Dendritic cell treated with granulocyte-macrophage colony-stimulating factor and Interleukin-4, amounts not matched to agents 40 ng/mL and 50 ng/mL, for 4 days (primary cell): ENCODE measurements at regions of chr9 and their contacts with region 1.

Region 1: GRCh38 chr9:79565245-79565644 is 6.5 kb upstream of the TLE4 start:
- H3K4me3 Mint-ChIP-seq: no peak overlapping the region
- H3K27ac Mint-ChIP-seq: no peak overlapping the region
- H3K4me1 Mint-ChIP-seq: peaks cover 16% of the 10 kb centered on the region
- H3K27me3 Mint-ChIP-seq: peaks cover 6% of the 10 kb centered on the region

Region 2: DNA sequence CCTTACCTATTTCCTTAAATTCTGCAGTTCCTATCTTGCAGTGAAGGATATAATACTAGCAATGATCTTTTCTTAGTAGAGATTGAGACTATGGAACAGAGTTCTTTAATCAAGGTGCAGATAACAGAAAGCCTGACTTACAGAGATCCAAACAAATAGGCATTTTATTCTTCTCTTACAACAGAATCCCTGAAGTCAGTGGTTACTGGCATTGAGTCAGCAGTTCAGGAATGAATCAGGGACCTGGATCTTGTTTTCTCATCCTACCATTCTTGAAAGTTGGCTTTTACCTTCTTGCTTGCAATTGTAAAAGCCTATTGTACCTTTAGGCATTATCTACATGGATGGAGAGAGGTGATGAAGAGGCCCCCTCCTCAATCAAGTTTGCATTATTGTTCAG is 41.0 kb before region 1 on chr9:
- intact Hi-C with region 1: no loop called
- H3K4me3 Mint-ChIP-seq: no peak overlapping the region
- H3K27ac Mint-ChIP-seq: no peak overlapping the region
- H3K4me1 Mint-ChIP-seq: no peaks in the 10 kb centered on the region
- H3K27me3 Mint-ChIP-seq: no peaks in the 10 kb centered on the region

Region 3: DNA sequence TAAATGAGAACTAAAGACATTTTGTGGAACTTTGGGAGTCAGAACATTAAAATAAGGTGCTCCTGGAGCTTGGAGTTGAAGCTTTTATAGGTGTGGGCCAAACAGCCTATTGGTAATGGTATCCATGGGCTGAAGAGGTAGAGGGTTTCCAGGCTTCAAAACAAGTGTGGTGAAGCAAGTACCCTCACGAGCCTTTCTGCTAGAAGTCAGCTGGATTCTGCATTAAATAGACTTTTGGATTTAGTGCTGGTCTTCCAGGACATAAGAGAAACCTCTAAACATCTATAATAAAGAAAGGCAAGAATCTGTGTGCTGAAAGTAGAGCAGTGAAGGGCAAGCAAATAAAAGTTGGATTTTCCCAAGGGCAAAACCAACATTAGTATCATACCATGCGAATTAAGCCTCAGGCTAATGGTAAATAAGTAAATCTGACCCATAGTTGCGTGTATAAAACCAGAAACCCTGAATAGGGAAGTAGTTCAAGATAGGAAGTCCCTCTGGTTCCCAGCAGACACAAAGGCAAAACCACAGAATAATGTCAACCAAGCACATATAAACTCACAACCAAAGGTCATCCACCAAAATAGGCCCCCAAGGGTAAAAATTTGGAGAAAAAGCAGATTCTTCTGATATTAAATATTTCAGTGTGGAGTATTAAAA is 312.8 kb after region 1 on chr9:
- intact Hi-C with region 1: loop called (anchors 10 kb)
- H3K4me3 Mint-ChIP-seq: no peak overlapping the region
- H3K27ac Mint-ChIP-seq: peak overlapping the region; percentile 69
- H3K4me1 Mint-ChIP-seq: peaks cover 30% of the 10 kb centered on the region
- H3K27me3 Mint-ChIP-seq: peaks cover 8% of the 10 kb centered on the region

Region 4: GRCh38 chr9:79962836-79963235 is 397.6 kb after region 1 on chr9:
- intact Hi-C with region 1: no loop called
- H3K4me3 Mint-ChIP-seq: no peak overlapping the region
- H3K27ac Mint-ChIP-seq: no peak overlapping the region
- H3K4me1 Mint-ChIP-seq: no peaks in the 10 kb centered on the region
- H3K27me3 Mint-ChIP-seq: no peaks in the 10 kb centered on the region

Region 5: DNA sequence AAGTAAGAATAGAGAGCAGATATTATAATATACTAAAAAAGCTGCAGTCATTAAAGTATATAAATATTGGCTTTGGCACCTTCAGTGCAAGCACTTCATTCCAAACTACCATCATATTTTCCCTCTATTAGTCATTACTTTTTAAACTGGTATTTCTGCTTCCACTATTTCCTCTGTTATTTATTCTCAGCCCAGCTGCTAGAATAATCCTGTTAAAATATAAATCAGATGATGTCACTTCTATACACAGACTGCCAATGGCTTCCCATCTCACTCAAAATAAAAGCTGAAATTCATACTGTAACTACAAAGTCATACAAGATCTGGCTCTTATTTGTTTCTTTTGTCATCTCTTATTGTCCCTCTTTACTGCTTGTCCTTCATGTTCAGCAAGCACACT is 439.5 kb after region 1 on chr9:
- intact Hi-C with region 1: no loop called
- H3K4me3 Mint-ChIP-seq: no peak overlapping the region
- H3K27ac Mint-ChIP-seq: no peak overlapping the region
- H3K4me1 Mint-ChIP-seq: no peaks in the 10 kb centered on the region
- H3K27me3 Mint-ChIP-seq: no peaks in the 10 kb centered on the region